Activated CD4-positive, alpha-beta T cell treated with anti-CD3 and anti-CD28 coated beads for 36 hours (primary cell): ENCODE measurements at regions of chr1 and their contacts with region 1.

Region 1: DNA sequence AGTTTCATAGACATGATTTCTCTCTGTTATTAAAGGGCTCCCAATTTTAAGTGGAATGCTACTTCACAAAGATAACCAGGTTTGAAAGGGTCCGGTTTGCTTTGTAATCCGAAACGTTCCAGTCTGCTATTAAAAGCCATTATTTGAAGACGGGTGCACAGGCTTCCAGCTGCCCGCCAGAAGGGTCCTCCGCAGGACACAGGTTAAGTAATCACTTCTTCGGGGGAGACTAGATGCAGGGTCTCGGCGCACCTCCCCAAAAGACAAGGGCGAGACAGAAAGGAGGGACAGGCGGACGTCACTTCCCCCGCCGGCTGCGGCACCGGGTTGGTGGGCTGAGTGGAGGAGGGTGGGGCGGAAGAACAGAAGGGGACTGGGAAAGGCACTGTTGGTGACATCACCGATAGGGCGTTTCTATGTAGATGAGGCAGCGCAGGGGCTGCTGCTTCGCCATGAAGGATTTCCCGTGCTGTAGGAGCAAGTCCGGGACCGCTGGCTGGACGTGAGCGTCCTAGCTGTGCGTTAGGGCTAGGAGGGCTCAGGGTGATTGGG is 8.9 kb downstream of the RNU1-2 start:
- DNase-seq: peak; percentile 100
- ATAC-seq: peak; percentile 90
- H3K4me3 Mint-ChIP-seq: no peak overlapping the region
- H3K27ac Mint-ChIP-seq: no peak overlapping the region
- H3K4me1 Mint-ChIP-seq: peaks cover 30% of the 10 kb centered on the region
- H3K27me3 Mint-ChIP-seq: no peaks in the 10 kb centered on the region

Region 2: GRCh38 chr1:15975805-15976680 is 928.6 kb before region 1 on chr1 and contains the start of gene ZBTB17:
- CTCF ChIA-PET with region 1: no interaction called
- POLR2A ChIA-PET with region 1: no interaction called
- intact Hi-C with region 1: loop called in 1 of 2 experiments (anchors 10 kb)
- DNase-seq: peak; percentile 98
- ATAC-seq: peak; percentile 89
- H3K4me3 Mint-ChIP-seq: peak within 1 kb of the TSS; percentile 85
- H3K27ac Mint-ChIP-seq: peak within 1 kb of the TSS; percentile 93
- H3K4me1 Mint-ChIP-seq: peaks cover 42% of the 10 kb centered on the region
- H3K27me3 Mint-ChIP-seq: no peaks in the 10 kb centered on the region
- total RNA-seq, gene ZBTB17: 47.7 to 48.3 TPM

Region 3: DNA sequence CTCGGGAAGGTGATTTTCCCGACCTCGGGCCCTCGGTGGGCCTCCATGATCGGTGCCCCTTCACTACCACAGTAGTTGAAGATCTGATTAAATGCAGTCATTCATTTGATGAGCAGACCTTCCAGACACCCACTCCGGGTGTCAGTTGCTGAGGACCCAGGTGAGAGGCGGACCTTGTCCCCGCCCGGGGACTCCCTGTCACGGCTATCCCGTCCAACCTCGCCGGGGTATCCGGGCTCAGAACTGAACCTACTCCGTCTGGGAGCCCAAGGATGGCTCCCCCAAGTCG is 260.5 kb before region 1 on chr1:
- CTCF ChIA-PET with region 1: no interaction called
- POLR2A ChIA-PET with region 1: interaction called, 3 read pairs
- intact Hi-C with region 1: loop called in 1 of 2 experiments (anchors 1 kb)
- DNase-seq: no peak
- ATAC-seq: peak; percentile 47
- H3K4me3 Mint-ChIP-seq: no peak overlapping the region
- H3K27ac Mint-ChIP-seq: no peak overlapping the region
- H3K4me1 Mint-ChIP-seq: peaks cover 3% of the 10 kb centered on the region
- H3K27me3 Mint-ChIP-seq: no peaks in the 10 kb centered on the region

Region 4: GRCh38 chr1:16677552-16678431 is 226.8 kb before region 1 on chr1:
- CTCF ChIA-PET with region 1: interaction called, 3 read pairs
- POLR2A ChIA-PET with region 1: interaction called, 6 read pairs
- intact Hi-C with region 1: loop called (anchors 10 kb)
- DNase-seq: peak; percentile 77
- ATAC-seq: peak; percentile 94
- H3K4me3 Mint-ChIP-seq: peak overlapping the region; percentile 50
- H3K27ac Mint-ChIP-seq: peak overlapping the region; percentile 58
- H3K4me1 Mint-ChIP-seq: peaks cover 26% of the 10 kb centered on the region
- H3K27me3 Mint-ChIP-seq: peaks cover 29% of the 10 kb centered on the region

Region 5: DNA sequence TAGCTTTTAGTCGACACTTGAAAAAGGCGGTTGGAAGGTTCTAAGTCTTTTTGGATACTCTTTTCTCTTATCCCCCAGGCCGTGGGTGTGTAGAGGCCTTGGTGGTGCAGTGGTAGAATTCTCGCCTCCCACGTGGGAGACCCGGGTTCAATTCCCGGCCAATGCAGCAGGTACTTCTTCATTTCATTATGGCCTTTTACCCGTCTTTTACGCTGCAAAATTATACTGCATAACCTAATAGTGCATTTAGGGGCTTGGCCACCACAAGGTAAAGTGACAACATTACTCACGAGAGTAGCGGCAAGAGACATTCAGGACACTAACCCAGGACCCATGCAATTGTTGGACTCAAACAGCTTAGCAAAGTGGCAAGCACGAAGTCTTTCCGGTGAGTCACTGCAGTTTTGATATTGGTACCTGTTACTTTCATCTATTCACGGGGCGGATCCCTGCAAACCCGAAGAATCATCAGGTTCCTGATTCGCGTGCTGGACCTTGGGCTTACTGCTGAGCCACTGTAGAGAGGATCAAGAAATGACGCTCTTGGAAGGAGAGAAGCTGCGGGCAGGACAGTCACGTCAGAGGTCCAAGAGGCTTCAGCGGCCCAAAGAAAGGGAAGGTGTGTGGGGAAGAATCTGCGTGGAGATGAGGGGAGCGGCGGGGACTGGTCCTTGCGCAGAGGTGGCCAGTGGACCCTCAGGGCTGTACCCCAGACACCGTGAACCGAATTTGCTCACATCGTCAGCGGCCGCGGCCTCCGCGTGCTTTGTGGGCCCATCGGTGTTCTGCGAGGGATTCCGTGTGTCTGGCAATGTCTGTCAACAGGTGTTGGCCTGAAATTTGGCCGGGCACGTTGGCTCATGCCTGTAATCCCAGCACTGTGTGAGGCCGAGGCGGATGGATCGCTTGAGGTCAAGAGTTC is 177.2 kb before region 1 on chr1:
- CTCF ChIA-PET with region 1: no interaction called
- POLR2A ChIA-PET with region 1: interaction called, 4 read pairs
- intact Hi-C with region 1: loop called in 1 of 2 experiments (anchors 10 kb)
- DNase-seq: peak; percentile 87
- ATAC-seq: peak; percentile 90
- H3K4me3 Mint-ChIP-seq: no peak overlapping the region
- H3K27ac Mint-ChIP-seq: no peak overlapping the region
- H3K4me1 Mint-ChIP-seq: no peaks in the 10 kb centered on the region
- H3K27me3 Mint-ChIP-seq: peaks cover 5% of the 10 kb centered on the region

Region 6: GRCh38 chr1:16888860-16889816 is 15.5 kb before region 1 on chr1:
- CTCF ChIA-PET with region 1: interaction called, 3 read pairs
- POLR2A ChIA-PET with region 1: interaction called, 22 read pairs
- intact Hi-C with region 1: loop called in 1 of 2 experiments (anchors 1 kb)
- DNase-seq: peak; percentile 84
- ATAC-seq: peak; percentile 79
- H3K4me3 Mint-ChIP-seq: peak overlapping the region; percentile 84
- H3K27ac Mint-ChIP-seq: peak overlapping the region; percentile 93
- H3K4me1 Mint-ChIP-seq: peaks cover 18% of the 10 kb centered on the region
- H3K27me3 Mint-ChIP-seq: peaks cover 2% of the 10 kb centered on the region

Region 7: GRCh38 chr1:17053685-17054410 is 149.2 kb after region 1 on chr1 and contains the start of gene SDHB:
- CTCF ChIA-PET with region 1: no interaction called
- POLR2A ChIA-PET with region 1: no interaction called
- intact Hi-C with region 1: loop called (anchors 1 to 2 kb)
- DNase-seq: peak; percentile 100
- ATAC-seq: peak; percentile 99
- H3K4me3 Mint-ChIP-seq: peak within 1 kb of the TSS; percentile 94
- H3K27ac Mint-ChIP-seq: peak within 1 kb of the TSS; percentile 97
- H3K4me1 Mint-ChIP-seq: peaks cover 21% of the 10 kb centered on the region
- H3K27me3 Mint-ChIP-seq: peaks cover 3% of the 10 kb centered on the region
- total RNA-seq, gene SDHB: 132 to 149 TPM